Calu3 (cell line): ENCODE measurements at regions of chr4 and their contacts with region 1.

Region 1: GRCh38 chr4:89502581-89502980 is 195.0 kb upstream of the GPRIN3 start:
- DNase-seq: no peak
- H3K4me3 Mint-ChIP-seq: no peak overlapping the region
- H3K27ac Mint-ChIP-seq: peak overlapping the region; percentile 56
- H3K4me1 Mint-ChIP-seq: peaks cover 30% of the 10 kb centered on the region
- H3K27me3 Mint-ChIP-seq: no peaks in the 10 kb centered on the region
- CTCF ChIP-seq: no peak

Region 2: DNA sequence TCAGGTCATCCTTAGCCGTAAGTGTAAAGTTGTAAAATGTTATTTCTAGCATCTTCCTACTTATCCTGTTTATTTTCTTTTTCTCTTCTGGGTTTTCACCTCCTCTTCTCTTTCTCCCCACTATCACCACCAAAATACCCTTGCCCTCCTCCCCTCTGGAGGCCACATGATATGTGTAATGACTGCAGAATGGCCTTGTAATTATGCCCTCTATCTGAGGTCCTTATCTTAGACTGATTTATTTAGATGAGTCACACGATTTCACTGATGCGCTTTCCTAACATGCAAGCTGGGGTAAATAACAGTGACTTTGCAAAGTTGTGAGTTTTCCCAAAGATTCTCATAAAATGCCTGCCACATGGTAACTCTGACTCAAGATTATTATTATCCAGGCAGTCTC is 36.8 kb after region 1 on chr4:
- CTCF ChIA-PET with region 1: no interaction called
- intact Hi-C with region 1: loop called (anchors 5 kb)
- DNase-seq: no peak
- H3K4me3 Mint-ChIP-seq: no peak overlapping the region
- H3K27ac Mint-ChIP-seq: no peak overlapping the region
- H3K4me1 Mint-ChIP-seq: peaks cover 15% of the 10 kb centered on the region
- H3K27me3 Mint-ChIP-seq: no peaks in the 10 kb centered on the region
- CTCF ChIP-seq: no peak